CD8-positive, alpha-beta T cell (primary cell): ENCODE measurements at regions of chr3 and their contacts with region 1.

Region 1: GRCh38 chr3:112561731-112562688 is at the starts of genes ATG3 and SLC35A5:
- DNase-seq: peak; percentile 98 to 100 (median 99)
- ATAC-seq: peak; percentile 77
- H3K4me3 ChIP-seq: peak within 1 kb of the TSS; percentile 75 to 82
- H3K4me3 Mint-ChIP-seq: peak within 1 kb of the TSS; percentile 97
- H3K27ac ChIP-seq: peak within 1 kb of the TSS; percentile 83 to 93
- H3K27ac Mint-ChIP-seq: peak within 1 kb of the TSS; percentile 99
- H3K4me1 ChIP-seq: peaks cover 22% of the 10 kb centered on the region
- H3K4me1 Mint-ChIP-seq: peaks cover 47% of the 10 kb centered on the region
- H3K27me3 ChIP-seq: no peaks in the 10 kb centered on the region
- H3K27me3 Mint-ChIP-seq: no peaks in the 10 kb centered on the region
- CTCF ChIP-seq: no peak
- total RNA-seq, gene ATG3: 50.0 to 54.4 TPM
- total RNA-seq, gene SLC35A5: 4.4 to 6.1 TPM

Region 2: GRCh38 chr3:112303764-112304325 is 258.2 kb before region 1 on chr3:
- CTCF ChIA-PET with region 1: no interaction called
- POLR2A ChIA-PET with region 1: interaction called, 10 read pairs
- intact Hi-C with region 1: no loop called
- DNase-seq: peak in 6 of 9 experiments; percentile 16 to 61 (median 31)
- ATAC-seq: peak; percentile 83
- H3K4me3 ChIP-seq: peak overlapping the region; percentile 44 to 60
- H3K4me3 Mint-ChIP-seq: no peak overlapping the region
- H3K27ac ChIP-seq: peak overlapping the region in 1 of 2 experiments; percentile 19
- H3K27ac Mint-ChIP-seq: no peak overlapping the region
- H3K4me1 ChIP-seq: peaks cover 14% of the 10 kb centered on the region
- H3K4me1 Mint-ChIP-seq: peaks cover 1% of the 10 kb centered on the region
- H3K27me3 ChIP-seq: no peaks in the 10 kb centered on the region
- H3K27me3 Mint-ChIP-seq: no peaks in the 10 kb centered on the region
- CTCF ChIP-seq: no peak

Region 3: DNA sequence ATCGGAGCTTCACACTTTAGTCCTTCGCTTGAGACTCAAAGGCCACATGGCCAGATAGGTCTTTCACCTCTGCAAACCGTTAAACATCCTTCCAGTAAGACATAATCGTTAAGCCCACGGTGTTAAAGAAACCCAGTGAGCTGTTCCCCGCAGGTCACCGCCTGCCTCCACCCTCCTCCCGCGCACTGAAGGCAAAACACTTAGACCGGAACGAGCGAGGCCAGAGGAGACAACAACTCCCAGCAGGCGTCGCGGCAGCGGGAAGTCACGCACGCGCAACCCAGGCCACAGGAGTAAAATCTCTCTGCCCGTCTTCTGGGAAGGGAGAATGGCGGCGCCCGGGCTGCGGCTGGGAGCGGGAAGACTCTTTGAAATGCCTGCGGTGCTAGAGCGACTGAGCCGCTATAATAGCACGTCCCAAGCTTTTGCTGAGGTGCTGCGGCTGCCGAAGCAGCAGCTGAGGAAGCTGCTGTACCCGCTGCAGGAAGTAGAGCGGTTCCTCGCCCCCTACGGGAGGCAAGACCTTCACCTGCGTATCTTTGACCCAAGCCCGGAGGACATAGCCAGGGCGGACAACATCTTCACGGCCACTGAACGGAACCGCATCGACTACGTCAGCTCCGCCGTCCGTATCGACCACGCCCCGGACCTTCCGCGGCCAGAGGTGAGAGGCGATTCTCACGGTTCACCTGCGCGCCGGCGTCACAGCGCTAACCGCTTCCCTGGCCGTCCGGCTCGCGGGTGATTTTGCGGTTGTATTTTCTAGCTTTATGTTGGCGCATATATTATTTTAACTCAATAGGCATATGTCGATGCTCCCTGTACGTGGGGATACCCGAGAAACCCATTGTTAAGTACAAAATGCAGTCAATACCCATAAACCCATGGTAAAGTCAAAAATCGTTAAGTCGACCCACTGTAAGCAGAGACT is 428.9 kb after region 1 on chr3 and contains the start of gene GTPBP8:
- CTCF ChIA-PET with region 1: no interaction called
- POLR2A ChIA-PET with region 1: no interaction called
- intact Hi-C with region 1: loop called (anchors 1 to 10 kb)
- DNase-seq: peak; percentile 61 to 93 (median 83)
- ATAC-seq: peak; percentile 84
- H3K4me3 ChIP-seq: peak within 1 kb of the TSS; percentile 97 to 98
- H3K4me3 Mint-ChIP-seq: peak within 1 kb of the TSS; percentile 93
- H3K27ac ChIP-seq: peak within 1 kb of the TSS; percentile 88 to 99
- H3K27ac Mint-ChIP-seq: peak within 1 kb of the TSS; percentile 97
- H3K4me1 ChIP-seq: peaks cover 22% of the 10 kb centered on the region
- H3K4me1 Mint-ChIP-seq: peaks cover 57% of the 10 kb centered on the region
- H3K27me3 ChIP-seq: no peaks in the 10 kb centered on the region
- H3K27me3 Mint-ChIP-seq: no peaks in the 10 kb centered on the region
- CTCF ChIP-seq: peak; percentile 24
- total RNA-seq, gene GTPBP8: 20.1 to 22.3 TPM

Region 4: DNA sequence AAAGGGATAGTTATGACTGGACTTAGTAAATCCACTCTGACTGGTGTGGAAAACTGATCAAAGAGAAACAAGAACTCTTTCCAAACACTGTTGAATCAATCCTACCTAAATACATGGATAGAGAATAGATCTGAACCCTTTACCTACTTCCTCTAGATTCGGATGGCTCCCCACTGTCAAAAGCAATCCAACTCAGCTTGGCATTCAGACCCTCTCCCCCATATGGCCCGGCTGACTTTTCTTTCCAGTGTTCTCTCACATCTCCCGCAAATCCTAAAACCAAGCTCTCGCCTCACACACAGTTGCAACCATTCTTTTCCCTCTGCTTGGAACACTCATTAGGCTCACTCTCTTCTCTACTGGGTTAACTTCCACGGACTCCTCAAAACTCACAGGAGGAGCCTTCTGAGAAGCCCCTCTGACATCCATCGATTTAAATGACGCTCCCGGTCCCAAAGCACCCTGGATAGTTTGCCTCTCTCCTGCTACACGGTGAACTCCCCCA is 952.3 kb after region 1 on chr3:
- CTCF ChIA-PET with region 1: no interaction called
- POLR2A ChIA-PET with region 1: no interaction called
- intact Hi-C with region 1: loop called in 1 of 2 experiments (anchors 2 kb)
- DNase-seq: no peak
- ATAC-seq: no peak
- H3K4me3 ChIP-seq: peak overlapping the region; percentile 82 to 96
- H3K4me3 Mint-ChIP-seq: no peak overlapping the region
- H3K27ac ChIP-seq: peak overlapping the region; percentile 89 to 91
- H3K27ac Mint-ChIP-seq: no peak overlapping the region
- H3K4me1 ChIP-seq: peaks cover 10% of the 10 kb centered on the region
- H3K4me1 Mint-ChIP-seq: peaks cover 18% of the 10 kb centered on the region
- H3K27me3 ChIP-seq: no peaks in the 10 kb centered on the region
- H3K27me3 Mint-ChIP-seq: peaks cover 3% of the 10 kb centered on the region
- CTCF ChIP-seq: no peak

Region 5: GRCh38 chr3:113696658-113697499 is 1134.9 kb after region 1 on chr3:
- CTCF ChIA-PET with region 1: no interaction called
- POLR2A ChIA-PET with region 1: no interaction called
- intact Hi-C with region 1: loop called (anchors 1 to 5 kb)
- DNase-seq: peak; percentile 96 to 100 (median 99)
- ATAC-seq: peak; percentile 84
- H3K4me3 ChIP-seq: peak overlapping the region; percentile 69 to 86
- H3K4me3 Mint-ChIP-seq: no peak overlapping the region
- H3K27ac ChIP-seq: peak overlapping the region; percentile 88 to 89
- H3K27ac Mint-ChIP-seq: no peak overlapping the region
- H3K4me1 ChIP-seq: peaks cover 32% of the 10 kb centered on the region
- H3K4me1 Mint-ChIP-seq: peaks cover 28% of the 10 kb centered on the region
- H3K27me3 ChIP-seq: no peaks in the 10 kb centered on the region
- H3K27me3 Mint-ChIP-seq: no peaks in the 10 kb centered on the region
- CTCF ChIP-seq: no peak